ENCODE measurements at regions of chr11 and their contacts with region 1.

Region 1: DNA sequence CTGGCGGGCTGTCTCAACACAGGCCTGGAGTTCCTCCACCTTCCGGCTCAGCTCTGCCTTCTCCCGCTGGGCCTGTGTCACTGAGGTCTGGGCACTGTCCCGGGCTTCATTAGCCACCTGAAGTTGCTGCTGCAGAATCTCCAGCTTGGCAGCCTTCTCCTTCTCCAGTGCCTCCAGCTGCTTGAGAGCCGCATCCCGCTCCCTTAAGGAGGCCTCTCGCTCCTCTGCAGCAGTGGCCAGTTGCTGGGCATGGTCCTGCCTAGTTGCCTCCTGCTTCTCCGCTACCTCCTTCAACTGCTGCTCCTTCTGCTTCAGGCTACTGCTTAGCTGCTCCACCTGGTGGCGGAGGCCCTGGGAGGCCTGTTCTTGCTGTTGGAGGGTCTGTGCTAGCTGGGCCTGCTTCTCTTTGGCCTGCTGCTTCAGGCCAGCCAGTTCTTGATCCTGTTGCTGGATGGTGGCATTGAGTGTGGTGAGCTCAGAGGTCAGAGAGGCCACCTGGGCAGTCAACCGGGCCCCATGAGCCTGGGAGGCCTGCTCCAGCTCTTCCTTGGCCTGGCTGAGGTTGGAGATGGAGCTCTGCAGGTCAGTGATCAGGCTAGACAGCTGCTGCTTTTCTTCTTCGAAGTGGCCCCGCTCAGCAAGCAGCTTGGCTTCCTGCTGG is 16.9 kb downstream of the IL18BP start:
- DNase-seq: no peak
- H3K4me3 Mint-ChIP-seq: no peak overlapping the region
- H3K27ac Mint-ChIP-seq: peak overlapping the region; percentile 69
- H3K4me1 Mint-ChIP-seq: no peaks in the 10 kb centered on the region
- H3K27me3 Mint-ChIP-seq: no peaks in the 10 kb centered on the region

Region 2: DNA sequence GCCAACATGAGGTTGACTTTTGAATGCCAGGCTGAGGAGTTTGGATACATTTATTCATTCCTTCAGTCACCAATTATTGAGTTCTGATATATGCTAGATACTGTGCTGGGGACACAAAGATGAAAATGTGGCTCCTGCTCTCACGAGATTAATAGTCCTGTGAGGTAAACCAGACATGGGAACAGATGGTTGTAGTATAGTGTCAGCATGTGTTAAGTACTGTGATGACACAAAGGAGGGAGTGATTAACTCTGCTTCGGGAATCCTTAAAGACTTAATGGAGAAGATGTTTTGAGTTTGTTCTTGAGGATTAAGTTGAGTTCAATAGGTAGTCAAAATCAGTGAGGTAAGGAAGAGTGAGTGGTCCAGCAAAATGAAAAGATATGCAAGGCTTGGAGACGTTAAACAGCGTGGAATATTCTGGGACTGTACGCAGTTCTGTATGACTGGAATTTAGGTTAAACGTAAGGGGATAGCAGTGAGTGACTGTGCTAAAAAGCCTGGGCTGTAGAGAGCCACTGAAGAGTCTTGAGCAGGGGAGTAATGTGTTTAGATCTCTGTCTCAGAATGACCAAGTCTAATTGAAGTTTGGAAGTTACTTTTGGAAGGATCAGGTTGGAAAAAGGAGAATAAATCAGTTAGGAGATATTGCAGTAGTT is 75.0 kb before region 1 on chr11:
- CTCF ChIA-PET with region 1: no interaction called
- POLR2A ChIA-PET with region 1: no interaction called
- DNase-seq: no peak
- H3K4me3 Mint-ChIP-seq: no peak overlapping the region
- H3K27ac Mint-ChIP-seq: no peak overlapping the region
- H3K4me1 Mint-ChIP-seq: no peaks in the 10 kb centered on the region
- H3K27me3 Mint-ChIP-seq: no peaks in the 10 kb centered on the region

Region 3: GRCh38 chr11:71998662-71999310 is 16.9 kb before region 1 on chr11 and contains the start of gene IL18BP:
- CTCF ChIA-PET with region 1: interaction called, 42 read pairs
- POLR2A ChIA-PET with region 1: interaction called, 4 read pairs
- DNase-seq: peak; percentile 62
- H3K4me3 Mint-ChIP-seq: peak within 1 kb of the TSS; percentile 78
- H3K27ac Mint-ChIP-seq: peak within 1 kb of the TSS; percentile 92
- H3K4me1 Mint-ChIP-seq: peaks cover 20% of the 10 kb centered on the region
- H3K27me3 Mint-ChIP-seq: no peaks in the 10 kb centered on the region
- total RNA-seq, gene IL18BP: 15.3 to 16.5 TPM

Region 4: GRCh38 chr11:72058416-72059034 is 42.9 kb after region 1 on chr11:
- CTCF ChIA-PET with region 1: no interaction called
- POLR2A ChIA-PET with region 1: no interaction called
- DNase-seq: no peak
- H3K4me3 Mint-ChIP-seq: no peak overlapping the region
- H3K27ac Mint-ChIP-seq: no peak overlapping the region
- H3K4me1 Mint-ChIP-seq: peaks cover 12% of the 10 kb centered on the region
- H3K27me3 Mint-ChIP-seq: no peaks in the 10 kb centered on the region

Region 5: DNA sequence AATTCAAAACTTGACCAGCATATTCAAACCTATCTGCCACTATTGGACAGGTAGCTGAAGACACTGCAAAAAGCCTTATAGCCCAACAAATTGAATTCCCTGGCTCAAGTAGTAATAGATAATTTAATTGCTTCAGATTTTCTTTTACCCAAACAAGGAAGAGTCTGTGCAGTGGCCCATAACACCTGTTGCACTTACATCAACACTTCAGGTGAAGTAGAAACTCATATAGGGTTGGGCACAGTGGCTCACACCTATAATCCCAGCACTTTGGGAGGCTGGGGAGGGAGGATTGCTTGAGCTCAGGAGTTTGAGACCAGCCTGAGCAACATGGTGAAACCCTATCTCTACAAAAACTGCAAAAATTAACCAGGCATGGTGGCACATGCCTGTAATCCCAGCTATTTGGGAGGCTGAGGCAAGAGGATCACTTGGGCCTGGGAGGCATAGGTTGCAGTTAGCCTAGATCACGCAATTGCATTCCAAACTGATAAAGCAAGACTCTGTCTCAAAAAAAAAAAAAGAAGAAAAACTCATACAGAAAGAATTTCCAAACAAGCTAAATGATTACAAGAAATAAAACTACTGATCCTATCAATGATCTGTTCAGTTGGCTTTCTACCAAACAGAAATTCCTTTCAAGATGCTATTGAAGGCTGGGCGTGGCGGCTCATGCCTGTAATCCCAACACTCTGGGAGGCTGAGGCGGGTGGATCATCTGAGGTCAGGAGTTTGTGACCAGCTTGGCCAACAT is 129.3 kb after region 1 on chr11:
- CTCF ChIA-PET with region 1: interaction called, 11 read pairs
- POLR2A ChIA-PET with region 1: no interaction called
- DNase-seq: no peak
- H3K4me3 Mint-ChIP-seq: no peak overlapping the region
- H3K27ac Mint-ChIP-seq: no peak overlapping the region
- H3K4me1 Mint-ChIP-seq: peaks cover 22% of the 10 kb centered on the region
- H3K27me3 Mint-ChIP-seq: peaks cover 4% of the 10 kb centered on the region

Region 6: DNA sequence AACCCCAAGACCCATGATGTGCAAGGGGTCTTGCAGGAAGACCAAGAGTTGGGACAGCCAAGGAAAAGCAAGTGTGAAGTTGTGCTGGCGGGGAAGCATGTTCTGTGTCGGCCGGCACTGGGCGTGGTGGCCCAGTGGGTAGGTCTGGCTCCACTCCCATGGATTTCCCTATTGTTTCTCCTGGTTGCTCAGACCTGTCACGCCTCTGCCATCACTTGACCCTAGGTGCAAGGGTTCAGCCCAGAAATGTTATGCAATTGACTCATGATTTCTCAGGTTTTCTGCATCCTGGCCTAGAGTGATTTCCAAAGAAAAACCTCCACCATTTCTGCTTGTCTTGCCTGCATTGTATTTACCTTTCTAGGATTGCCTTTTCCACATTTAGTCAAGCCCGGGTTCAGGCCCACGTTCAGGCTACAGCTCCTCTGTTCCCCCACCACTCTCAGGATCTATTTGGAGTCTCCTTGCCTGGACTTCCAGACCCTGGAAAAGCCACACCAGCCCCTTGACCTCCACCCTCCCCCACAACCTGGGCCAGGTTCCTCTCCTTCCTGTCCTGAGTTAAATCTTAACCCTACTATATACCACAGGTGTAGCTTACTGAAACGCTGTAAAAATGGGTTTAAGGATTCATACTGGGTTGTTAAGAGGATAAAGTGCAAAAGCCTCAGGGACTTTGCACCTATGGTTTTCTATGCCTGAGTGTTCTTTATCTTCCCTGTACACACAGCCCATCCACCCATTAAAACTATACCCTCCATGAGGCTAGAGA is 158.8 kb after region 1 on chr11:
- CTCF ChIA-PET with region 1: no interaction called
- POLR2A ChIA-PET with region 1: no interaction called
- DNase-seq: no peak
- H3K4me3 Mint-ChIP-seq: no peak overlapping the region
- H3K27ac Mint-ChIP-seq: no peak overlapping the region
- H3K4me1 Mint-ChIP-seq: peaks cover 4% of the 10 kb centered on the region
- H3K27me3 Mint-ChIP-seq: peaks cover 3% of the 10 kb centered on the region

Measured in activated CD4-positive, alpha-beta T cell treated with anti-CD3 and anti-CD28 coated beads, Interleukin-2, amount 10 ng/mL, durations not matched to agents 7 days and 5 days (primary cell).